HEK293T (cell line): ENCODE measurements at regions of chr12 and their contacts with region 1.

Region 1: DNA sequence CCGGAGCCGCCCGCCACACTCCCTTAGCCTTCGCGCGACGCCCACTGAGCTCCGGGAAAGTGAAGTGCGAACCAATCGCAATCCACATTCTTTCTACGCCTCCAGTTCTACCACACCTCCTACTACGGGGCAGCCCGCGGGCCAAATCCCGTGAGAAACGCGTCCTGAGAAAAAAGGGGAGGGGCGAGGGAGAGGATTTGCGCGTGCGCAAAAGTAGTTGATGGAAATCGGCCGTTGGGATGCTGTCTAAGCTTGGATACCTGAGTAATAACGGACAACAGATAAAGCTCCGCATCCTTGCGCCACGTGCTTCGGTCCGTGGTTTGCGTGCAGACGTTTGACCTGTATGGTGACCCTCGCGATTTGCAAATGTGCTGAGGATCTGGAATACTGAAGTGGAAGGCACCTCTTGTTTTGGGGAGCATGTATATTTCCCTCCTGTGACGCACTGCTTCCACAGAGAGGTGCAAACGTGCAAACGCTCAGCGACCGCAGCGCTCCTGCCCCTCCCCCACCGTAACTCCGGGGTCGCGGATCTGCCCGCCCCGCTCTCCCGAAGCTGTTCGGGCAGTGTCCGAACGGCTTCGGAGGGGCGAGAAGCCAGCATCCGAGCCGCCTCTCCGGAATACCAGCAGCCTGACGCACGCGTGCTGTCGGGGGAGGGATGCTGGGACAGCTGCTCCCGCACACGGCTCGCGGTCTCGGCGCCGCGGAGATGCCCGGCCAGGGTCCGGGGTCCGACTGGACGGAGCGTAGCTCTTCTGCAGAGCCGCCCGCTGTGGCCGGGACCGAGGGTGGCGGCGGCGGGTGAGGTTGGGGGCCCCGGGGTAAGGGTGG is at the starts of genes FAM216A and GPN3:
- DNase-seq: peak; percentile 92

Region 2: DNA sequence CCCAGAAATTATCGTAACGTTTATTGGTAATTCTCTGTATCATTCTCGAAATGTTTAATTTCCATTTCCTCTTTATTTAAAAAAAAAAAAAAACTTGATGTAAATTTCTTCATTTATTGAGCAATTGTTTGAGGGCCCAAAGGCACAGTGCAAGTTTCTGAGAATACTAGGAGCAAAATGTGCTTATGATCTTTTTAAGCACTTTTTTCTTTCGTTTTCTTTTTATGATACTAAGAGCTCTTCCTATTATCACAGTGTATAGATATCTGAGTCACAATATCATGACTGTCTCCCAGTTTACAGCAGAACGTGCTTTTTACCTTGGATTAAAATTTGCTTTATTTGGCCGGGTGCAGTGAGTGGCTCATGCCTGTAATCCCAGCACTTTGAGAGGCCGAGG is 181.8 kb before region 1 on chr12:
- CTCF ChIA-PET with region 1: no interaction called
- POLR2A ChIA-PET with region 1: no interaction called
- DNase-seq: no peak

Region 3: DNA sequence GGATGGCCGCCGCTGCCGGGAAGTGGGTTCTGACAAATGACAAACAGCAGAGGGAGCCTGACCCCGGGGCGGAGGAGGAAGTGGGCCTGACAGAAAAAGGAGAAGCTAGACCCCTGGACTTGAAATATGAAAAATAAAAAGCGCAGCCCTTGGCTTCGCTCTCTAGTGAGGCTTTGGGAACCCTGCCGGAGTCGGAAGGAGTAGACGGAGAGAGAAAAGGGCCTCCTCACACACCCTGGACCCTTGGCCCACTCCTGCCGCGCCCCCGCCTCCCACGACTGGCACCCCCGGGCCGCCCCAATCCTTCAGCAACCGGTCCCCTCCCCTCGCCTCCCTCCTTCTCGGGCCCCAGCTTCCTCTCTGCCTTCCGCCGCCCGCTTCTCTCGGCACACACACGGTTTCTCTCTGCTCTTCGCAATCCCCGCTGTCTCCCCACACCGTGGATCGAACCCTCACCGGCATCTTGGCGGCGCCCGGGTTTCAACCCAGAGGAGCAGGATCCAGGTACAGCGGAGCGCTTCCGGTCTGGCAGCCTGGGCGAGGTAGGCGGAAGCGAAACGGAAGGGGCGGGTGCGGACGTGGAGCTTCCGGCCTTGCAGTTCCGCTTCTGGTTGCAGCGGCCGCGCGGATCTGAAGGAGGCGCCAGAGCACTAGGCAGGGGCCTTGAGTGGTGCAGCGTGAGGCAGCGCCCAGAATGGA is 18.5 kb before region 1 on chr12 and contains the start of gene ARPC3:
- CTCF ChIA-PET with region 1: interaction called, 9 read pairs
- POLR2A ChIA-PET with region 1: interaction called, 49 read pairs
- DNase-seq: peak; percentile 93

Region 4: GRCh38 chr12:110501752-110502738 is 33.6 kb after region 1 on chr12 and contains the starts of genes RAD9B and VPS29:
- CTCF ChIA-PET with region 1: interaction called, 5 read pairs
- POLR2A ChIA-PET with region 1: interaction called, 28 read pairs
- DNase-seq: peak; percentile 91

Region 5: DNA sequence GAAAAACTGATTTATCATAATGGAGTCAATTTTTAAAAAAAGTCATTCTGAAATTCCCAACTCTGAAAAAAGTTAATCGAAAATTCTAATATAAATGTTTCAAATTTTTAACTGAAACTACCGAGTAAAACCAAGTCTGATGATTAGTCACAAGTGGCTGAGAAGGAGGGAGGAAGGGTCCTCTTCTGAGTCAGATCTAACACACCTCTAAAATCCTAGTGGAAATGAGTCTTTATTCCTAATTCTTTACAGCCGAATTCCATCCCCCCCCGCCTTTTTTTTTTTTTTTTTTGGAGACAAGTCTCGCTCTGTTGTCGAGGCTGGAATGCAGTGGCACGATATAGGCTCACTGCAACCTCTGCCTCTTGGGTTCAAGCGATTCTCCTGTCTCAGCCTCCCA is 71.6 kb after region 1 on chr12:
- CTCF ChIA-PET with region 1: no interaction called
- POLR2A ChIA-PET with region 1: no interaction called
- DNase-seq: no peak

Region 6: GRCh38 chr12:110563702-110564640 is 95.5 kb after region 1 on chr12:
- CTCF ChIA-PET with region 1: no interaction called
- POLR2A ChIA-PET with region 1: no interaction called
- DNase-seq: no peak

Region 7: DNA sequence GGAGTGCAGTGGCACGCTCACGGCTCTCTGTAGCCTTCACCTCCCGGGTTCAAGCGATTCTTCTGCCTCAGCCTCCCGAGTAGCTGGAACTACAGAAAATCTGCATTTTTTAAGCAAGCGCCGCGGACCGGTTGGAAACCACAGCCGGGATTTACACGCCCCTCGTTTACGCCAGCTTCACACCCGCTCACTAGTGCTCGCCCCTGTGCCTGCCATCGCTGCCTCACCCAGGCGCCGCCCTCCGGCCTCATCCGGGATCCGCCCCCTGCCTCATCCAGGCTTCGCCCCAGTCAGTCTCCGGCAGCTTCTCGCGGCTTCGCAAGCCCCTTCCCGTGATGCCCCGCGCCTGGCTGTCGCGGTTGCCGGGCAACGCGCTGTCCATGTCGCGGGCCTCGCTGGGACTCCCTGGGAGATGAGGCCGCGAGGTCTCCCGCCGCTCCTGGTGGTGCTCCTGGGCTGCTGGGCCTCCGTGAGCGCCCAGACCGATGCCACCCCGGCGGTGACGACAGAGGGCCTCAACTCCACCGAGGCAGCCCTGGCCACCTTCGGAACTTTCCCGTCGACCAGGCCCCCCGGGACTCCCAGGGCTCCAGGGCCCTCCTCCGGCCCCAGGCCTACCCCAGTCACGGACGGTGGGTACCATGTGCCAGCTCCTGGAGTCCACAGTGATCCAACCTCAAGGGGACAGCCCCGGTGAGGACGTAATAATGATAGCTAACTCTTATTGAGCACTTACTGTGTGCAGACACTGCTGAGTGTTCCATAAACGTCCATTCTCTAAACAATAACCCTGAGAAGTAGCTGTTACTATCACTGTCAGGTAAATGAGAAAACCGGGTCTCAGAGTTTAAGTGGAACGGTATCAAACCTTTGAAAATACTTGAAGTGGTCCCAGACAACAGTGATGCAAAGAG is 145.6 kb after region 1 on chr12 and contains the start of gene TCTN1:
- CTCF ChIA-PET with region 1: no interaction called
- POLR2A ChIA-PET with region 1: interaction called, 12 read pairs
- DNase-seq: peak; percentile 98